ENCODE measurements at regions of chr18 and their contacts with region 1.

Region 1: DNA sequence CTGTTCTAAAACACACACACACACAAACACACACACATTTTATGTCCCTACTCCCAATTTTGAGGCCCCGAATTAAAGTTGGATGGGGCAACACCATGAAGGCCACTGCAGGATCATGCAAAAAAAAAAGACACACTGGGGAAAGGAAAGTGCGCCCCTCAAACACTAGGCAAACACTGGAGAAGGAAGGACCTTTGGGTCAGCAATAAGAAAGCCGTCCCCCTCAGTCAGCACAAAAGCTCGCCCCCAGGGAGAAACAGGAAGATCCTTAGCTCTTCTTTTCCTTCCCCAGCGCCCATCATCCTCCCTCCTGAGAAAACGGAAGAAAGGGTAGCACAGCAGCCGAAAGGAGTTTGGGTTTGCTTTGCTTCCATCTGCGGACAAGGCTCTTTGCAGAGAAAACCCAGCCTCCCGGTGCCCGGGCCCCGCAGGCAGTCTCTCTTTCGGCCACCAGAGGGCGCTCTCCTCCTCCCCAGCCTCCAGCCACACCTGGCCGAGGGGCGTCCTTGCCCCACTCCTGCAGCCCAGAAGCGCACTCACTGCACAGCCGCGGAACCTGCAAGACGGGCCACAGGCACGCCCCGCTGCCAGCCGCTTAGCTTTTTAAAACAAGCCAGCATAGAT is 248.5 kb downstream of the CDH20 start:
- DNase-seq: peak; percentile 63 to 81 (median 80)
- H3K4me3 ChIP-seq: peak overlapping the region in 5 of 7 experiments; percentile 32 to 62 (median 46)
- H3K27ac ChIP-seq: no peak overlapping the region
- H3K4me1 ChIP-seq: peaks cover 0 to 10% (median 6%) of the 10 kb centered on the region in 4 experiments
- H3K27me3 ChIP-seq: peaks cover 0 to 13% (median 7%) of the 10 kb centered on the region in 5 experiments

Region 2: GRCh38 chr18:61808286-61808685 is 226.6 kb after region 1 on chr18:
- CTCF ChIA-PET with region 1: no interaction called
- POLR2A ChIA-PET with region 1: no interaction called
- DNase-seq: no peak
- H3K4me3 ChIP-seq: no peak overlapping the region
- H3K27ac ChIP-seq: no peak overlapping the region
- H3K4me1 ChIP-seq: no peaks in the 10 kb centered on the region
- H3K27me3 ChIP-seq: no peaks in the 10 kb centered on the region

Region 3: GRCh38 chr18:62131301-62131909 is 549.7 kb after region 1 on chr18:
- CTCF ChIA-PET with region 1: interaction called, 14 read pairs
- POLR2A ChIA-PET with region 1: no interaction called
- DNase-seq: peak; percentile 66 to 84 (median 78)
- H3K4me3 ChIP-seq: no peak overlapping the region
- H3K27ac ChIP-seq: no peak overlapping the region
- H3K4me1 ChIP-seq: no peaks in the 10 kb centered on the region
- H3K27me3 ChIP-seq: no peaks in the 10 kb centered on the region